Transverse colon (tissue), 4 donors: ENCODE measurements at regions of chr5 and their contacts with region 1.

Region 1: DNA sequence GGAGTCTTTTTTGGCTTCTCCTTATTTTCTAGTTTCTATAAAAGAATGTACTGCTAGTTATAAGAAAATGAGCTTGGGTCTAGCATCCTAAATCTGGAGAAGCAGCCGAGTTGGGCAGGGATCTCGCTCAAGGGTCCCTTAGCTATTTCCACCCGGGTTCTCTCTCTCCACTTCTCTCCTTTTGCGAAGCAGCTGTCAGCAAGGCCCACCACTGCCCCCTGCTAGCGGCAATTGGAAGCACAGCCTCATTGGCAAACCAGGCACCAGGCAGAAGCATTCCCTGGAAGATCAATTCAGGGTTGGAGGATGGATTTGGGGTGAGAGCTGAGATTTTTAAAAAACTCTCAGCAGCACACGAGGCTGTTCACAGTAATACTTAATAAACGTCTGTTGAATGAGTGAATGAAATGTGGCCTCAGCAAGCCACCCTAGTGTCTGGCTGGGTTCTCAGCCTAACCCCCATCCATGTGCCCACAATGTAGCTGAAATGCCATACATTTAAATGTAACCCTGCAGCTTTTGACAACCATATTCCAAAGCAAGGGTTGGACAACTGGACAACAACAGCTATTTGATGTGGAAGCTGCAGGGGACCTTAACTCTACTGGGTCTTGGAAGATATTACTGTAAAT is 34.6 kb upstream of the TNIP1 start:
- DNase-seq: peak; percentile 84
- H3K4me3 ChIP-seq: no peak overlapping the region
- H3K27ac ChIP-seq: peak overlapping the region in 1 of 4 donors; percentile 17
- H3K4me1 ChIP-seq: peaks cover 0 to 17% (median 2%) of the 10 kb centered on the region in 4 donors
- H3K27me3 ChIP-seq: no peaks in the 10 kb centered on the region
- CTCF ChIP-seq: peak; percentile 95 to 97 (median 96)
- EP300 ChIP-seq: no peak
- POLR2A ChIP-seq: no peak

Region 2: GRCh38 chr5:150862070-150862469 is 253.3 kb before region 1 on chr5:
- in situ Hi-C with region 1: no loop called
- intact Hi-C with region 1: no loop called
- DNase-seq: no peak
- H3K4me3 ChIP-seq: no peak overlapping the region
- H3K27ac ChIP-seq: no peak overlapping the region
- H3K4me1 ChIP-seq: no peaks in the 10 kb centered on the region
- H3K27me3 ChIP-seq: no peaks in the 10 kb centered on the region
- CTCF ChIP-seq: no peak
- EP300 ChIP-seq: no peak
- POLR2A ChIP-seq: no peak

Region 3: GRCh38 chr5:151051066-151051930 is 64.1 kb before region 1 on chr5:
- in situ Hi-C with region 1: loop called (anchors 5 to 10 kb)
- intact Hi-C with region 1: loop called (anchors 2 kb)
- DNase-seq: peak; percentile 89
- H3K4me3 ChIP-seq: no peak overlapping the region
- H3K27ac ChIP-seq: peak overlapping the region; percentile 15 to 82 (median 43)
- H3K4me1 ChIP-seq: peaks cover 5 to 34% (median 13%) of the 10 kb centered on the region in 4 donors
- H3K27me3 ChIP-seq: no peaks in the 10 kb centered on the region
- CTCF ChIP-seq: peak; percentile 85 to 95 (median 86)
- EP300 ChIP-seq: no peak
- POLR2A ChIP-seq: no peak

Region 4: GRCh38 chr5:151141535-151141934 is 26.1 kb after region 1 on chr5:
- in situ Hi-C with region 1: no loop called
- intact Hi-C with region 1: no loop called
- DNase-seq: peak; percentile 59
- H3K4me3 ChIP-seq: no peak overlapping the region
- H3K27ac ChIP-seq: peak overlapping the region; percentile 20 to 64 (median 55)
- H3K4me1 ChIP-seq: peaks cover 38 to 55% (median 41%) of the 10 kb centered on the region in 4 donors
- H3K27me3 ChIP-seq: no peaks in the 10 kb centered on the region
- CTCF ChIP-seq: no peak
- EP300 ChIP-seq: no peak
- POLR2A ChIP-seq: no peak